ENCODE measurements at regions of chr2 and their contacts with region 1.

Region 1: DNA sequence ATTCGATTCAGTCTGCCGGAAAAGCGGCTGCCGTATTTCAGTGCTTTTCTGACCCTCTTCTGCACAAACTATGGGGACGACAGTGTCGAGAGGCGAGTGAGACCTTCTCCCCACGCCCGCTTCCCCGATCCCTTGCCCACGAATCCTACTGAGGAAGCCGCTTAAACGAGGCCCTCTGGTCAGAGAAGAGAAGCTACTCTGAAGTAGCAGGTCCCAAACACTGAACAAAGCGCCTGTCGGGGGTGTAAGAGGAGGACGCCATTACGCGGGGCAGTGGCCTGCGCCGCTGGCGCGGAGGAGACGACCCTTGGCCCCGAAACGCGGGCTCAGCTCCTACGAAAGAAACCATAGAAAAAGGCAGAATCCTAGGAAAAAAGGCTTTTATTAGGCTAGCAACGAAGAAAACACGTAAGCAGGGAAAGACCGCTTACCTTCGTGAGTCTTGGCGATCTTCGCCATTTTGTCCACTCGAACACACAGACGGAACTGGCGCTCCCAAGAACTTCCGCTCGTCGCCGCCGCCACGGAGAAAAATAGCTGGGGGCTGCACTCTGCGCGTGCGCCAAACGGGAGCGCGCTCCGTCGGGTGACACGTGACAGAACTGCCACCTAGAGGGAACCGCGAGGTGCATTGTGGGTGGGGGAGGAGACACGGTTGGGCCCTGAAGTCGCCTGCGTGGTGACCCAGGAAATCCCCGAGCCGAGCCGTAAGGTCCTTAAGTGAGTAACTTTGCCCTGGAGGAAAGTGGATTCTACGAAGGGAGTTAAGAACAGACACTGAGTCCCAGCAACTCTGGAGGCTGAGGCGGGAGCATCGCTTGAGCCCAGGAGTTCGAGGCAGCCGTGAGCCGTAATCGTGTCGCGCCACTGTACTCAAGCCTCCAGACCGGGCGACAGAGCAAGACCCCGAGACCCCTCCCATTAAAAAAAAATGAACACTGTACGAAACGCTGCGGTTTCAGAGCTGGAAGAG is at the start of gene SF3B1:
- DNase-seq: peak; percentile 99
- H3K4me3 Mint-ChIP-seq: peak within 1 kb of the TSS; percentile 95
- H3K27ac Mint-ChIP-seq: peak within 1 kb of the TSS; percentile 99
- H3K4me1 Mint-ChIP-seq: peaks cover 50% of the 10 kb centered on the region
- H3K27me3 Mint-ChIP-seq: no peaks in the 10 kb centered on the region
- total RNA-seq, gene SF3B1: 247 and 268 TPM in 2 replicates

Region 2: GRCh38 chr2:196160101-196160500 is 1274.7 kb before region 1 on chr2:
- intact Hi-C with region 1: loop called (anchors 10 kb)
- DNase-seq: peak; percentile 74
- H3K4me3 Mint-ChIP-seq: peak overlapping the region; percentile 76
- H3K27ac Mint-ChIP-seq: peak overlapping the region; percentile 93
- H3K4me1 Mint-ChIP-seq: peaks cover 91% of the 10 kb centered on the region
- H3K27me3 Mint-ChIP-seq: no peaks in the 10 kb centered on the region

Region 3: GRCh38 chr2:197198890-197199289 is 235.9 kb before region 1 on chr2:
- intact Hi-C with region 1: loop called (anchors 2 kb)
- DNase-seq: peak; percentile 90
- H3K4me3 Mint-ChIP-seq: peak overlapping the region; percentile 87
- H3K27ac Mint-ChIP-seq: peak overlapping the region; percentile 98
- H3K4me1 Mint-ChIP-seq: peaks cover 91% of the 10 kb centered on the region
- H3K27me3 Mint-ChIP-seq: peaks cover 2% of the 10 kb centered on the region

Region 4: GRCh38 chr2:197416268-197416667 is 18.6 kb before region 1 on chr2:
- intact Hi-C with region 1: loop called (anchors 1 kb)
- DNase-seq: no peak
- H3K4me3 Mint-ChIP-seq: no peak overlapping the region
- H3K27ac Mint-ChIP-seq: no peak overlapping the region
- H3K4me1 Mint-ChIP-seq: no peaks in the 10 kb centered on the region
- H3K27me3 Mint-ChIP-seq: no peaks in the 10 kb centered on the region

Region 5: DNA sequence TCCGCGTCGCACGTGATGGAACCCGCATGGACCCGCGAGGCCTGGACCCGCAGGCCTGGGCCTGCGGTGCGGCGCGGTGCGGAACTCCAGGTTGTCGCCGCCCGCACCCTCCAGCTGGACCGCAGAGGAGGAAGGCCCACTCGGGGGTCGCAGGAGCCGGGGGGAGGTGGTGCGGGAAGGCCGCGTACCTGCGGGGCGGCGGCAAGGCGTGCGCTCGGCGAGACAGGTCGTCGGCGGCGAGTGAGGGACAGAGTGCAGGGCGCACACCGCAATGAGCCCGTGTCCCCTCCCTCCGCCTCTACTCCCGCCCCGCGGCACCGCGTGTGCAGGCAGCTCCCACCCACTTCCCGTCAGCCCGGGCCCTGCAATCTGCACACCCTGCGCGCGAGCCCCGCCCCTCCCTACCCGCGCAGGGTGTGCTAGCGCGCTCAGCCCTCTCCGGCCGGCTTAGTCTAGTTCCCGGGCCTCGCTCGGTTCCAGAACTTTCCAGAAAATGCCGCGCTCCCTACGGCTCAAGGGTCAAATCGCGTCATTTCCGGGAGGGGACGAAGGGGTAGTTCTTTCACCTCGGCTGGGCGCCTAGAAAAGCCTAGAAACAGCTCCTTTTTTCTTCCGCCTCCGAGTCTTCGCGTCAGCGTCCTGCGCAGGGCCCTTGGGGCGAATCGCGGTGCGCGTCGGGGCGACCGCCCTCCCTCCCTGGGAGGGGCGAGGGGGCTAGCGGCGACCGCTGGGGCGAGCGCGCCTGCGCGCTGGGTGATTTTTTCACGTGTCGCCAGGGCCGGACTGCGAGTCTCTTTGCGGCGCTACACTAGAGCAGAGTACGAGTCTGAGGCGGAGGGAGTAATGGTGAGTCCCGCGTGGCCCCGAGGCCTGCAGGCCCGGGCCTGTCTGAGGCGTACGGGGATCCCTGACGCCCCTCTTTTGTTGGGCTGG is 65.0 kb after region 1 on chr2 and contains the starts of genes HSPD1 and HSPE1:
- intact Hi-C with region 1: loop called (anchors 1 kb)
- DNase-seq: peak; percentile 98
- H3K4me3 Mint-ChIP-seq: peak within 1 kb of the TSS; percentile 100
- H3K27ac Mint-ChIP-seq: peak within 1 kb of the TSS; percentile 99
- H3K4me1 Mint-ChIP-seq: peaks cover 50% of the 10 kb centered on the region
- H3K27me3 Mint-ChIP-seq: no peaks in the 10 kb centered on the region
- total RNA-seq, gene HSPD1: 811 and 821 TPM in 2 replicates
- total RNA-seq, gene HSPE1: 325 and 343 TPM in 2 replicates

Region 6: GRCh38 chr2:197777823-197778407 is 343.1 kb after region 1 on chr2:
- intact Hi-C with region 1: loop called (anchors 1 kb)
- DNase-seq: peak; percentile 6
- H3K4me3 Mint-ChIP-seq: no peak overlapping the region
- H3K27ac Mint-ChIP-seq: no peak overlapping the region
- H3K4me1 Mint-ChIP-seq: no peaks in the 10 kb centered on the region
- H3K27me3 Mint-ChIP-seq: peaks cover 10% of the 10 kb centered on the region

Measured in activated T-helper 1 cell treated with anti-CD3 and anti-CD28 coated beads, Interleukin-12 subunit alpha, Interleukin-12 subunit beta, Interleukin-2, Interleukin-4 antibody, amounts not matched to agents 30 ng/mL and 10 ng/mL and 1 ng/mL, durations not matched to agents 14 hours and 24 hours and 36 hours (primary cell).